ENCODE measurements at regions of chr13 and their contacts with region 1.

Region 1: GRCh38 chr13:36431654-36432511 is at the start of gene CCNA1:
- DNase-seq: peak; percentile 46
- ATAC-seq: peak; percentile 60
- H3K4me3 ChIP-seq: peak within 1 kb of the TSS; percentile 67
- H3K27ac ChIP-seq: peak within 1 kb of the TSS; percentile 64
- H3K4me1 ChIP-seq: peaks cover 18% of the 10 kb centered on the region
- H3K27me3 ChIP-seq: no peaks in the 10 kb centered on the region
- CTCF ChIP-seq: no peak
- total RNA-seq, gene CCNA1: 18.3 and 18.6 TPM in 2 replicates

Region 2: DNA sequence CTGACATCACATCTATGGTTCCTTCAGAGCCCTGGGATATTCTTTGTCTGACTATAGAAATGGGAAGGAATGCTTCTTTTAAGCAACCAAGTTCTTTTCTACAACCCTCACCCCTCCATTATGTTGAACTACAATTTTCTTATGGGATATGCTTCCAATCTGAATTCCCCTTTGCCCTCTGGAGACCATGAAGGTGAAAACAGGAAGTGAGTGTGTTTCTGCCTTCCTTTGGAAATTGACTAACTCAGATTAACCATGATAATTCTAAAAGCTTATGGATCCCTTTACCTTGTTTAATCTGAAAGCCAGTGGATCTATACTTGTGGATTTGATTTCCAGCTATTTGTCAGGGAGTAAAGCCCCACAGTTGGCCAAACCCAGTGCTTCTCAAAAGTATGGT is 151.1 kb after region 1 on chr13:
- CTCF ChIA-PET with region 1: no interaction called
- POLR2A ChIA-PET with region 1: no interaction called
- intact Hi-C with region 1: no loop called
- DNase-seq: no peak
- ATAC-seq: no peak
- H3K4me3 ChIP-seq: no peak overlapping the region
- H3K27ac ChIP-seq: no peak overlapping the region
- H3K4me1 ChIP-seq: no peaks in the 10 kb centered on the region
- H3K27me3 ChIP-seq: peaks cover 29% of the 10 kb centered on the region
- CTCF ChIP-seq: no peak

Region 3: DNA sequence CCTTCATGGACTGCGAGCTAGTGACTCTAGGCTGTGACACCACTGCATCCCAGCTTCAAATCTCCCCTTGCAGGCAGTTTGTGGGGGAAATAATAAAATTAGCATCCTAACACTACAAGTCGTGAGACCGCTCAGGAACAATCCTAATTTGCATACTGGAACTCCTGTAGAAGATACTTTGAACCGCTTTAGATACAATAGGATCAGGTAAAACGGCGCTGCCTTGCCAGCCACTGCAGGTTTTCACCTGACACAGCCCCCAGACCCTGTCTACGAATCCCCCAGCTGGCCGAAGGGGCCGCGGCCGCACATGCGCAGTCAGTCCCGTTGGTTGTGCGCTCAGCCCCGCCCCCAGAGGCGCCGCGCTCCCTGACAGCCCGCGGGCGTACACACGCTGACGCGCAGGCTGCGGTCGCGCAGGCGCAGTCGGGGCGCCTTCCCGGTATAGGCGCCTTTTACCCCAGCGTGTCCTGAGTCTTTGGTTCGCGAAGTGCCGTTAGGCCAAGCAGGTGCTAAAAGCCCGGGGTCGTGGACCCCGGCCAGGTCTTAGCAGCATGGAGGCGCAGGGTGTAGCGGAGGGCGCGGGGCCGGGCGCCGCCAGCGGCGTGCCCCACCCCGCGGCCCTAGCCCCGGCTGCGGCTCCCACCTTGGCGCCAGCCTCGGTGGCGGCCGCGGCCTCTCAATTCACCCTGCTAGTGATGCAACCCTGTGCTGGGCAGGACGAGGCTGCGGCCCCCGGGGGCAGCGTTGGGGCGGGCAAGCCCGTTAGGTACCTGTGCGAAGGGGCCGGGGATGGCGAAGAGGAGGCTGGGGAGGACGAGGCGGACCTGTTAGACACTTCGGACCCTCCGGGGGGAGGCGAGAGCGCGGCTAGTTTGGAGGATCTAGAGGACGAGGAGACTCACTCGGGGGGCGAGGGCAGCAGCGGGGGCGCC is 387.2 kb after region 1 on chr13 and contains the start of gene RFXAP:
- CTCF ChIA-PET with region 1: no interaction called
- POLR2A ChIA-PET with region 1: no interaction called
- intact Hi-C with region 1: loop called (anchors 10 kb)
- DNase-seq: peak; percentile 76
- ATAC-seq: peak; percentile 87
- H3K4me3 ChIP-seq: peak within 1 kb of the TSS; percentile 81
- H3K27ac ChIP-seq: no peak within 1 kb of the TSS
- H3K4me1 ChIP-seq: peaks cover 21% of the 10 kb centered on the region
- H3K27me3 ChIP-seq: no peaks in the 10 kb centered on the region
- CTCF ChIP-seq: no peak
- total RNA-seq, gene RFXAP: 1.2 and 2.8 TPM in 2 replicates

Measured in PC-3 (cell line).